ENCODE measurements at regions of chr14 and their contacts with region 1.

Region 1: DNA sequence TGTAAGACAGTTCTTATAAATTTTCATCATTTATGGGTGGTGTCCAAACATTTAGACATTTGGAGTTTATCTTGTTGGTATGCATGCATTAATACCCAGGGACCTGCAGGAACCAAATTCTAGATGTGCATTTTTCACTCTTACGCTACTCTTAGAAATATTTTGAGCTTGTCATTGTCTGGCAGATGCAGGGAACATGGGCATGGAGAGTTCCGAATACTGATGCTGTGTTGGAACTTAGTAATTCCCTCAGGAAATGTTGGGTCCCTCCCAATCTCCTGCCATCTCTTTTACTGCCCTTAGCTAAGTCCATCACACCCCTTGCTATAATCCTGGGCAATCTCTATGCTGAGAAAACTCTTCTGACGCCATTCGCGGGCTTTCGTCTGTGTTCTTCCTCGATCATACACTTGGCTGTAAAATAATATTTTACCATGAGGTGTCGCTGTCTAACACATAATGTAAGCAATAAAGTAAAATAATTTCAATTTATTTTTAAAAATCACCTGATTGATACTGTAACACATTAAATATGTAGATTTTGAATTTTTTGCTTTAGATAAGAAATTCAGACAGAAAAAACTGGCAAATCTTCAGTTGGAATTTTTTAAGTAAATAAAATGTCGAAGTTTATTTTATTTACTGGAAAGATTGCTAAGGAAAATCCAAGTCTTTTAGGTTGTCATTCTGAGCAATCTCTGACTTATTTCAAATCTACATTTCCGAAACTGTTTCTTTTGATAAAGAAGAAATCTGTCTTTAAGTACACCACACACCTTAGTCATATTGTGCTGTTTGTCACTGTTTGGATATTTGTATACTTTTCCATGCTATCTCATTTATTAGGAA is 304.1 kb upstream of the SSTR1 start:
- DNase-seq: peak in 1 of 5 donors; percentile 10
- ATAC-seq: peak in 2 of 4 donors; percentile 38 to 47
- H3K4me3 ChIP-seq: no peak overlapping the region
- H3K27ac ChIP-seq: no peak overlapping the region
- H3K4me1 ChIP-seq: peaks cover 0 to 13% (median 0%) of the 10 kb centered on the region in 12 donors
- H3K27me3 ChIP-seq: peaks cover 0 to 10% (median 0%) of the 10 kb centered on the region in 9 donors
- CTCF ChIP-seq: peak; percentile 32 to 74 (median 62)
- POLR2A ChIP-seq: no peak

Region 2: DNA sequence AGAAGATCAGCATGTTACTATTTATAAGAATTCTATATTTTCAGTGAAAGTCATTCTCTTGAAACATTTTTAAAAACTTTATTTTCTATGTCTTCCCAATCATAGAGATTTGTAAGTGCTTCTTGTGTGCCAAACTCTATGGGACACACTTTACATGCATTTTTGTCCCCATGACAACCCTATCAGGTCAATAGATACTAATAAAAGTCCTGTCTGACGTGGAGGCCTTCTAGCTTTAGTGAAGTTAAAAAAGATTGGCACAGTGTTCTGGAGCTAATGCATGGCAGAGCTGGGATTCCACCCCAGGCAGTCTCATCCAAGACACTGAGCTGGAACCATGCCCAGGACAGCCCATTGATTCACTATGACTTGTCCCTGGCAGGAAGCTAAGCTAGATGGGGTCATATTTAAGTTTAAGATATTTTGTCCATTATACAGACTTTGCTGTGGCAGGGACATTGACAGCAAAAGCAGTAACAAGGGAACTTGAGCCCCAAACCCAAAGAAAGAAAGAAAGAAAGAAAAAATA is 280.1 kb before region 1 on chr14:
- intact Hi-C with region 1: no loop called
- DNase-seq: no peak
- ATAC-seq: no peak
- H3K4me3 ChIP-seq: no peak overlapping the region
- H3K27ac ChIP-seq: no peak overlapping the region
- H3K4me1 ChIP-seq: peaks cover 0 to 8% (median 0%) of the 10 kb centered on the region in 12 donors
- H3K27me3 ChIP-seq: peaks cover 8 to 62% (median 28%) of the 10 kb centered on the region in 9 donors
- CTCF ChIP-seq: no peak
- POLR2A ChIP-seq: no peak

Region 3: DNA sequence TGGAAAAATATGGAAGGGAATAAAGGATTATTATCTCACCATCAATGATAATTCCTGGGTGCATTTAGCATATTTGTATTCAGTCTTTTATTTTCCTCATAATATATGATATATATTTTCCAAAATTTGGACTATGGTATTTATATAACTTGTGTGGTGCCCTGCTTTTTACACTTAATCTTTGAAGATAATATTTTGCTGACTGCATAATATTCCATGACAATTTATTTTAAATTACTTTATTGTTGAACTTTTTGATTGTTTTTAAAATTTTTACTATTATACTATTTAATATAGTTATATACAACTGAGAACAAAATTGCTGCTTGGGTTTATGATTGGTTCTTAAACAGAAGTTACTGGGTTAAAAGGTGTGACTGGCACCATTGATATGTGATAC is 95.8 kb before region 1 on chr14:
- intact Hi-C with region 1: no loop called
- DNase-seq: no peak
- ATAC-seq: no peak
- H3K4me3 ChIP-seq: no peak overlapping the region
- H3K27ac ChIP-seq: no peak overlapping the region
- H3K4me1 ChIP-seq: no peaks in the 10 kb centered on the region
- H3K27me3 ChIP-seq: no peaks in the 10 kb centered on the region
- CTCF ChIP-seq: no peak
- POLR2A ChIP-seq: no peak

Region 4: DNA sequence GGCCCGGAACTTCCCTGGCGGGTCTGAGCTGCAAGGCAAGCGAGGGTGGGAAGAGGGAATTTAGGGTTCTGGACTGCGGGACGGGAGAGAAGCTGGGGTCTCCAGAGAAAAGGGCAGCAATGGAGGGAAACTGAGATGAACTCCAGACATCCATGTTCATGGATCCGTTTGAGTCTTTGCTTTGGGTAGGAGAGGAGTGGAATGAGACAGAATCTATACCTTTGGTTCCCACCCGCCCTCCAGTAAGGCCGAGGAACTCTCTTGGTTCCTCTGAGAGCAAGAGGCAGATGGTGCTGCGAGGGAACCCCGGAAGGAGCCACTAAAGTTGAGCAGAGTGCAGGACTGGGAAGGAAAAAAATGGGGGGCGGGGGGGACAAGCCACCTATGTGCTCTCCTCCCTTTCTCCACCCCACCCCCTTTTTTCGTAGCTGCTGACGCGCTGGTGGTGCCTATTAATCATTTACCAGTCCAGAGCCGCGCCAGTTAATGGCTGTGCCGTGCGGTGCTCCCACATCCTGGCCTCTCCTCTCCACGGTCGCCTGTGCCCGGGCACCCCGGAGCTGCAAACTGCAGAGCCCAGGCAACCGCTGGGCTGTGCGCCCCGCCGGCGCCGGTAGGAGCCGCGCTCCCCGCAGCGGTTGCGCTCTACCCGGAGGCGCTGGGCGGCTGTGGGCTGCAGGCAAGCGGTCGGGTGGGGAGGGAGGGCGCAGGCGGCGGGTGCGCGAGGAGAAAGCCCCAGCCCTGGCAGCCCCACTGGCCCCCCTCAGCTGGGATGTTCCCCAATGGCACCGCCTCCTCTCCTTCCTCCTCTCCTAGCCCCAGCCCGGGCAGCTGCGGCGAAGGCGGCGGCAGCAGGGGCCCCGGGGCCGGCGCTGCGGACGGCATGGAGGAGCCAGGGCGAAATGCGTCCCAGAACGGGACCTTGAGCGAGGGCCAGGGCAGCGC is 305.3 kb after region 1 on chr14:
- intact Hi-C with region 1: loop called in 1 of 10 experiments (anchors 10 kb)
- DNase-seq: peak in 3 of 5 donors; percentile 11 to 56 (median 20)
- ATAC-seq: peak in 3 of 4 donors; percentile 65 to 77 (median 70)
- H3K4me3 ChIP-seq: peak overlapping the region; percentile 16 to 61 (median 55)
- H3K27ac ChIP-seq: peak overlapping the region in 1 of 12 donors; percentile 29
- H3K4me1 ChIP-seq: peaks cover 0 to 30% (median 5%) of the 10 kb centered on the region in 12 donors
- H3K27me3 ChIP-seq: peaks cover 0 to 58% (median 38%) of the 10 kb centered on the region in 9 donors
- CTCF ChIP-seq: peak in 7 of 12 donors; percentile 7 to 33 (median 15)
- POLR2A ChIP-seq: no peak

Region 5: DNA sequence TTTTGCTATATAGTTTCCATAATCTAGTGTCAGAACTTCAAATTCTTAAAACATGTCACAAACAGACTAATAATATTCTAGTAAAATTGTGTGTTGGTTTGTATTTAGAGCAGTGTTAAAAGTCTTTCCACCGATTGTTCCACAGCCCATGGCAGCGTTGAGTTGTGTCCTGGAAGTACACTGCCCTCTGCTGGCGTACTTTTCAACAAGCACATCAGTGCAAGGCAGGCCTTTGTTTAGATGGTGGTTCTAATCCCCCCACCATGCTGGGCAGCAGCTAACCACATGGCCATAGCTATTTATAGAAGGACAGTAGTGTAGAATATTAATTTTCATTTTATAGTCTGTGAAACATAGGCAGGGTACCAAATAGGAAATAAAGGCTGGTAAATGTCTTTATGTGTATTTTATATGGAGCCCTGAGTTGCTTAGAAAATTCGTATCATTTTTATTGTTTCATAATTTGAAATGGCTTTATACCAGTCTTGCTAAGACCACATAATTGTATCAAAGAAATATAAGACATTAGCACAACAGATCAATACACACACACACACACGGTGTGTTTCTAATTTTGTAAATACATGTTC is 964.1 kb after region 1 on chr14:
- intact Hi-C with region 1: loop called in 9 of 10 experiments (anchors 5 to 10 kb)
- DNase-seq: peak; percentile 60 to 75 (median 72)
- ATAC-seq: peak; percentile 61 to 90 (median 86)
- H3K4me3 ChIP-seq: no peak overlapping the region
- H3K27ac ChIP-seq: no peak overlapping the region
- H3K4me1 ChIP-seq: peaks cover 0 to 24% (median 0%) of the 10 kb centered on the region in 12 donors
- H3K27me3 ChIP-seq: no peaks in the 10 kb centered on the region
- CTCF ChIP-seq: peak; percentile 68 to 91 (median 82)
- POLR2A ChIP-seq: no peak

Region 6: GRCh38 chr14:38873941-38874612 is 970.5 kb after region 1 on chr14:
- intact Hi-C with region 1: loop called in 9 of 10 experiments (anchors 5 to 10 kb)
- DNase-seq: no peak
- ATAC-seq: peak in 1 of 4 donors; percentile 42
- H3K4me3 ChIP-seq: no peak overlapping the region
- H3K27ac ChIP-seq: peak overlapping the region in 1 of 12 donors; percentile 70
- H3K4me1 ChIP-seq: peaks cover 0 to 20% (median 5%) of the 10 kb centered on the region in 12 donors
- H3K27me3 ChIP-seq: no peaks in the 10 kb centered on the region
- CTCF ChIP-seq: no peak
- POLR2A ChIP-seq: no peak

Region 7: DNA sequence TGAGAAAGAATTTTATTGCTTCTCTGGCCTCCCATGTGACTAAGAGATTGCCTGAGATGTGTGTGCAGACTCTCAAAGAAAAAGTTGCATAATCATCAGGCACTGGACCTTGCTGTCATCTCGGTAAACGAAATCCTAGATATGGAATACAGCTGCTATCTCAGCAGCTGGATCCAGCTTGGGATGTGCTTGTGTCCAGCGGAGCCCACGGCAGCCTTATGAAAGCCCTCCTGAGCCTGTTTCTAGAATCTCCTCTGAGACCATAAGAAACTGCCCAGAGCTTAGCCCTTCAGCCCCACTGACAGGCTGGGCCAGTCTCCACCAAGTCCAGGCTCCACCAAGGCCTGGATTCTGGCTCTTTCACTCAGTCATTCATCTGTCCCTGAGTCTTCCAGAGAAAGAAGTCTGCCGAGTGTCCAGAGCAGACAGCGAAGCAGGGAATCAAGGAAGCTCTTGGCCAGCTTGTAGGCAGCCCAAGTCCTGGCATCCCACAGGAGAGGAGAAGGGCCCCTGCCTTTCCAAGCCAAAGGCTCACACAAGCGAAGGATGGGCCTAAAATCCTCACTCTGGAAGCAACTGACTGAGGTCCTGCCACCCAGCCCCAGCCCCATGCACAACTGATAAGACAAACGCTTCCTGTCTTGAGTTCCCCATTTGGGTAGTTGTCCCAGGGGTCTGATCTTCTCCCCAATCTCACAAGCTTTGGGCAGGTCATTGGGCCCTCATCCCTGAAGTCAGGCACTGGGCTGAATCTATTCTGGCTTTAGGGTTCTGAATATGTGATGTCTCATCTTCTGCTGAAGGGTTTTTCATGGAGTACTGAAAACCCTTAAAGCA is 1101.7 kb after region 1 on chr14:
- intact Hi-C with region 1: loop called in 7 of 10 experiments (anchors 5 to 10 kb)
- DNase-seq: peak in 3 of 5 donors; percentile 32 to 64 (median 40)
- ATAC-seq: peak; percentile 51 to 94 (median 86)
- H3K4me3 ChIP-seq: no peak overlapping the region
- H3K27ac ChIP-seq: peak overlapping the region in 2 of 12 donors; percentile 13 to 17
- H3K4me1 ChIP-seq: peaks cover 0 to 6% (median 0%) of the 10 kb centered on the region in 12 donors
- H3K27me3 ChIP-seq: no peaks in the 10 kb centered on the region
- CTCF ChIP-seq: no peak
- POLR2A ChIP-seq: no peak

Region 8: DNA sequence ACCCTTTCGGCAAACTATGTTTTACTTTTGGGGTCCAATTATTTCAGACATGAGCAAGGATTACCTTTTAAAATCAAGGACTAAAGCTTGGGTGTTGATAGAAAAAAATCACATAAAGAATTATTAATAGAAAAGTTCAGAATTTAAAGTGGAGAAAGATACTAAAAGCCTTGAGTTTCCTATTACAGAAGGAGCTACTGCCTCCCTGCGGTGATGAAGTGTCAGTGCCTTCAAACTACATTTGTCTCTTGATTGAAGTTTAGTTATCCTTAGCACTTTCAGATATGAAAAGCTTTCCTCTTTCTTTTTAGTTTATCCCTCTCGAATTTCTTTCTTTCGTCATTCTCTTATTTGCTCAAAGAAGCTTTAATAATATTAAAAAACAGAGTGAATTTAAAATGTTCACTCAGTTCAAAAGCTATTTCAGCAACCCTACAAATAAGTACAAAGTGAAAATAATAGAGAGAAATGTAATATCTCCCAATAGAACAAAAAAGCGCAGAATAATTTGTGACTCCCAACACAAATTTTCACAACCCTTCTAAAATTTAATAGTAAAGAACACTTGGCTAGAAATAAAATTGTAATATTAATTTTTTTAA is 1111.9 kb after region 1 on chr14:
- intact Hi-C with region 1: loop called in 7 of 10 experiments (anchors 5 to 10 kb)
- DNase-seq: peak in 1 of 5 donors; percentile 16
- ATAC-seq: no peak
- H3K4me3 ChIP-seq: no peak overlapping the region
- H3K27ac ChIP-seq: no peak overlapping the region
- H3K4me1 ChIP-seq: peaks cover 0 to 4% (median 0%) of the 10 kb centered on the region in 12 donors
- H3K27me3 ChIP-seq: no peaks in the 10 kb centered on the region
- CTCF ChIP-seq: peak; percentile 67 to 92 (median 80)
- POLR2A ChIP-seq: no peak

Measured in heart left ventricle (tissue), 16 donors.